ENCODE measurements at regions of chr1 and their contacts with region 1.

Region 1: DNA sequence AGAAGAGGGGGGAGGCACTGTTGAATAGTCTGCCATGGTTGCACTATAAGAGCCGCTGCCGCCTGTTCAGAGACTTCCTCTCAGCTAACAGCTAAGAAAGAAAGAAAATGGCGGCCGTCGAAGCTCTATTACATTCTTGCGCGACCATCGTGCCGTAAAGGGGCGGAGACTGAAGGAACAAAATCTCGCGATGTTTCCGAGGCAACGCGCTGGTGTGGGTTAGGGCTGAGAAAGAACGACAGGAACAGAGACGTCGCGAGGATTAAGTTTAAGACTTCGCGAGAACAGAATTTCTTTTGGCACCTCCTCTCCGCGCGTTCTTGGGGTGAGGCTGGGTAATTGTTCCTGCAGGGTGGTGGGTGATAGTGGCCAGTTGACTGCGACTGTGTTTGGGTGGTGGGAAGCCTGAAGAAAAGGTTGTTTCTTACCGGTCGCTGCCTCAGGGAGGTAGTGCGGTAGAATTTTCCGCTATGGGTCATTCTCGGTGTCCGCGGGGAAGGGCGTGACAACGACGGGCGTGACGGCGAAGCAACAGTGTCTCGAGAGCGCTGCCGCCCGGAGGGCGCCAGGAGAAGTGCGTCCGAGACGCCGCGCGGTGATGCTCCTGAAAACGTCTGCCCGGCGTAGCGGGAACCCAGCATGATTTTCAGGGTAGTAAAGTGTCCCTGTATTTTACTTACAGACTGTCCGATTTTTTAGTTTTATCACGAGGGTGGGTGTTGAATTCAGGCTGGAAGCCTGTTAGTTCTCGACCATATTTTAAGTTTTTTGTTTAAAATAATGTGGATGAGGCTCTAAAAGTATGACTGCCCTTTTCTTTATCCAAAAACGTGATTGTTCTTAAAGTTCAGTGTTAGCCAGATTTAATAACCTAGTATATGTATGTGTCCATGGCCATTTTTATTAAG is at the start of gene FUBP1:
- DNase-seq: peak; percentile 99
- H3K4me3 Mint-ChIP-seq: no peak within 1 kb of the TSS
- H3K27ac Mint-ChIP-seq: no peak within 1 kb of the TSS
- H3K4me1 Mint-ChIP-seq: peaks cover 47% of the 10 kb centered on the region
- H3K27me3 Mint-ChIP-seq: no peaks in the 10 kb centered on the region
- total RNA-seq, gene FUBP1: 243 to 244 TPM

Region 2: DNA sequence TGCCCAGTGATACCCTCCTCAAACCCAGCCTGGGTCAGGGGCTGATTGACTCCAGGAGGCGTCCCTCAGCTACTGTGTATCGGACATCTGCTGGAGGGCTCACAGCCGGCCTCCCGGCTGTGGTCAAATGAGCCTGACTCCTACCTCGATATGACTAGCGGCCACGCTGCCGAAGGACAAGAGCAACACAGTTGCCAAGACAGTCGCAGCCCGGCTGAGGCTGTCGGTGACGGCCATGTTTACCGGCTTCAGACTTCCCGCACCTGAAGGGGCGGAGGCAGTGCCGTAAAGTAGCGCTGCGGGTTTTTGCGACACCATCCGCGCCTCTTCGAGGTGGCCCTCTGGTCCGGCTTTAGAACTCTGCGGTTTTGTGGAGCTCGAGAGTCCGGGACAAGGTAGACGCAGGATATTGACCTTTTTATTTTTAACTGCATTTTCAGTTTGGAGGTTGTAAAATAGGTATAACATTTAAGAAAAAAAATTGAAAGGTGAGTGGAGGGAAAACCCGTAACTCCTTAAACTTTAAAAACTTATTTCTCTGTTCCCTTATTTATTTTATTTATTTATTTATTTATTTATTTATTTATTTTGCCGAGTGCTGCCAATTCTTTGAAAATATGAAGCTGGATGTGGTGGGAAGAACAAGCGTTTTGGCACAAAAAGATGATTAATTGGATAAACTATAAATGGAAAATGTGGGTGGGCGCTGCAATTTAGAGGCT is 759.9 kb before region 1 on chr1 and contains the start of gene PIGK:
- CTCF ChIA-PET with region 1: no interaction called
- intact Hi-C with region 1: loop called (anchors 2 kb)
- DNase-seq: peak; percentile 95
- H3K4me3 Mint-ChIP-seq: peak within 1 kb of the TSS; percentile 93
- H3K27ac Mint-ChIP-seq: peak within 1 kb of the TSS; percentile 94
- H3K4me1 Mint-ChIP-seq: peaks cover 37% of the 10 kb centered on the region
- H3K27me3 Mint-ChIP-seq: no peaks in the 10 kb centered on the region
- total RNA-seq, gene PIGK: 27.3 to 30.8 TPM

Region 3: GRCh38 chr1:77438236-77438913 is 540.8 kb before region 1 on chr1:
- CTCF ChIA-PET with region 1: no interaction called
- intact Hi-C with region 1: loop called (anchors 5 kb)
- DNase-seq: no peak
- H3K4me3 Mint-ChIP-seq: peak overlapping the region; percentile 70
- H3K27ac Mint-ChIP-seq: peak overlapping the region; percentile 81
- H3K4me1 Mint-ChIP-seq: peaks cover 28% of the 10 kb centered on the region
- H3K27me3 Mint-ChIP-seq: no peaks in the 10 kb centered on the region

Region 4: DNA sequence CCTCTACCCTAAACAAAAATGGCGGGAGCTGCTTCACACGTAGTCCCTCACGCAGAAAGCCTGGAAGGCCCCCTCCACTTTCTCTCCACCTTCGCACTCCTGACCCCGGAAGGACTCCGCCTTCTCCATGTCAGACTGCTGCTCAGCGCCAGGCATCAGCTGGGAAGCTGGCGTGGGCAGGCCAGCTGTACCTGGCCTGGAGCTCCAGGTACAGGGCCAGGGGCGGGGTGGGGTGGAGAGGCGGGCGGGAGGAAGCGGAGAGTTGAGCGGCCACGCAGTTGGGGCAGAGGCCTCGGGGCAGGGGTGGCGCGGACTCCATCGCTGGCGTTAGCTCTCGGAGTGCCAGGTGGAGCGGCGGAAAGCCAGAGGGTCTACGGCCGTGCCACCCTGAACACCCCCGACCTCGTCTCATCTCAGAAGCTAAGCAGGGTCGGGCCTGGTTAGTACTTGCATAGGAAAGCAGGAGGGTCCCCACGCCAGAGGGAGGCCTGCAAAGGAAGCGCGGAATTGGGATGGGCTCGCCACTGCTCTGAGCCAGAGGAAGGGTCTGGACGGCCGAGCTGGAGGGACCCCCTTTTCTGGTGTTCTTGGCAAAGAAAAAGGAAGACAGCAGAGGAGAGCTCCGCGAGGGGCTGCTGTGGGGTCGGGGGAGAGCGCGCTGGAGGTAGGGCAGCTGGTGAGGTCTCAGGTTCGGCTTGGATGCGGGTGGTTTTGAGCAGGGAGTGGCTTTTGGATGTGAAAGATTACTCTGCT is 199.5 kb before region 1 on chr1 and contains the start of gene MIGA1:
- CTCF ChIA-PET with region 1: no interaction called
- intact Hi-C with region 1: loop called (anchors 1 kb)
- DNase-seq: peak; percentile 90
- H3K4me3 Mint-ChIP-seq: peak within 1 kb of the TSS; percentile 88
- H3K27ac Mint-ChIP-seq: peak within 1 kb of the TSS; percentile 85
- H3K4me1 Mint-ChIP-seq: peaks cover 34% of the 10 kb centered on the region
- H3K27me3 Mint-ChIP-seq: no peaks in the 10 kb centered on the region
- total RNA-seq, gene MIGA1: 7.7 to 8.8 TPM

Region 5: GRCh38 chr1:77950873-77951272 is 28.4 kb before region 1 on chr1:
- CTCF ChIA-PET with region 1: interaction called, 4 read pairs
- intact Hi-C with region 1: loop called (anchors 1 kb)
- DNase-seq: no peak
- H3K4me3 Mint-ChIP-seq: no peak overlapping the region
- H3K27ac Mint-ChIP-seq: peak overlapping the region; percentile 69
- H3K4me1 Mint-ChIP-seq: peaks cover 43% of the 10 kb centered on the region
- H3K27me3 Mint-ChIP-seq: no peaks in the 10 kb centered on the region

Region 6: GRCh38 chr1:78040484-78041089 is 61.4 kb after region 1 on chr1:
- CTCF ChIA-PET with region 1: interaction called, 4 read pairs
- intact Hi-C with region 1: loop called (anchors 1 kb)
- DNase-seq: no peak
- H3K4me3 Mint-ChIP-seq: peak overlapping the region; percentile 57
- H3K27ac Mint-ChIP-seq: peak overlapping the region; percentile 32
- H3K4me1 Mint-ChIP-seq: peaks cover 27% of the 10 kb centered on the region
- H3K27me3 Mint-ChIP-seq: peaks cover 15% of the 10 kb centered on the region

Region 7: GRCh38 chr1:78617615-78618026 is 638.4 kb after region 1 on chr1:
- CTCF ChIA-PET with region 1: no interaction called
- intact Hi-C with region 1: loop called (anchors 1 kb)
- DNase-seq: peak; percentile 66
- H3K4me3 Mint-ChIP-seq: no peak overlapping the region
- H3K27ac Mint-ChIP-seq: no peak overlapping the region
- H3K4me1 Mint-ChIP-seq: peaks cover 30% of the 10 kb centered on the region
- H3K27me3 Mint-ChIP-seq: no peaks in the 10 kb centered on the region

Measured in activated naive CD4-positive, alpha-beta T cell treated with anti-CD3 and anti-CD28 coated beads for 36 hours (primary cell).